ENCODE measurements at regions of chr1 and their contacts with region 1.

Region 1: DNA sequence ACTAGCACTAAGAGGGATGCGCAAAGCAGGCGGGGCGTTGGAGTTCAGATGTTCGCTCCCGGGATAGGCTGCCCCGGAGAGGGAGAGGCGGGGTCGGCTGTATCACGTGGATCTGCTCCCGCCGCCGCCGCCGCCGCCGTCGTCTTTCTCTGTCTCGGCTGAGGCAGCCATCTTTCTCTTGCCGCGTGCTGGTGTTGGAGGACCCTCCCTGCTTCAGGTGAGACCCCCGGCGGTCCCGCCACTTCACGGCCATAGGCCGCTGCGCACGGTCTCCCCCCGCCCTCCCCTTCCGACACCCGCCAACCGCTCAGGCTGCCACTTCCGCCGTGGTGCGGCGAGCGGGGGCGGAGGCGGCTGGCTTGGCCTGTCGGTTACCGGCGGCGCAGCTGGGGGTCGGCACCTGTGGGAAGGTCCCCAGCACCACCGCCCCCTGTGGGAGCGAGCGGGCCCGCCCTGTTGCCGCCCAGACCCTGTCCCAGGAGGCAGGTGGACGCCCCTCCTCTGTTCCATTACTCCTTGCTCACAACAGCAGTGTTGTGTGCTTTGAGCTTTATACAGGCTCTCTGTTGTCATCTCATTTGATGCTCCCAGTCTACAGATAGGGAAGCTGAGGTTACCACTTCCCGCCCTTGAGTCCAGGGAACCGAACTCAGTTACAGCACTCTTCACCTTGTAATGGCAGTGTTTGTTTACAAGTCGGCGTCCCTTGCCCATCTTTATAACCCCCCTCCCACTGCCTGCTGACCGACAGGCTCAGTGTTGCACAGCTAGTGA is at the start of gene BTF3L4:
- DNase-seq: peak; percentile 98
- H3K4me3 Mint-ChIP-seq: peak within 1 kb of the TSS; percentile 92
- H3K27ac Mint-ChIP-seq: peak within 1 kb of the TSS; percentile 100
- H3K4me1 Mint-ChIP-seq: peaks cover 46% of the 10 kb centered on the region
- H3K27me3 Mint-ChIP-seq: no peaks in the 10 kb centered on the region
- total RNA-seq, gene BTF3L4: 48.0 and 50.0 TPM in 2 replicates

Region 2: GRCh38 chr1:51616901-51617708 is 439.2 kb before region 1 on chr1 and contains the start of gene OSBPL9:
- intact Hi-C with region 1: loop called (anchors 10 kb)
- DNase-seq: peak; percentile 95
- H3K4me3 Mint-ChIP-seq: peak within 1 kb of the TSS; percentile 99
- H3K27ac Mint-ChIP-seq: peak within 1 kb of the TSS; percentile 97
- H3K4me1 Mint-ChIP-seq: peaks cover 23% of the 10 kb centered on the region
- H3K27me3 Mint-ChIP-seq: peaks cover 6% of the 10 kb centered on the region
- total RNA-seq, gene OSBPL9: 47.4 and 47.9 TPM in 2 replicates

Region 3: GRCh38 chr1:52033190-52034049 is 22.9 kb before region 1 on chr1 and contains the start of gene KTI12:
- intact Hi-C with region 1: loop called (anchors 1 kb)
- DNase-seq: peak; percentile 96
- H3K4me3 Mint-ChIP-seq: peak within 1 kb of the TSS; percentile 95
- H3K27ac Mint-ChIP-seq: peak within 1 kb of the TSS; percentile 97
- H3K4me1 Mint-ChIP-seq: peaks cover 30% of the 10 kb centered on the region
- H3K27me3 Mint-ChIP-seq: no peaks in the 10 kb centered on the region
- total RNA-seq, gene KTI12: 20.4 and 22.3 TPM in 2 replicates

Region 4: GRCh38 chr1:52323731-52324130 is 267.4 kb after region 1 on chr1:
- intact Hi-C with region 1: no loop called
- DNase-seq: no peak
- H3K4me3 Mint-ChIP-seq: no peak overlapping the region
- H3K27ac Mint-ChIP-seq: no peak overlapping the region
- H3K4me1 Mint-ChIP-seq: no peaks in the 10 kb centered on the region
- H3K27me3 Mint-ChIP-seq: no peaks in the 10 kb centered on the region

Region 5: GRCh38 chr1:52365746-52366516 is 309.6 kb after region 1 on chr1 and contains the start of gene CC2D1B:
- intact Hi-C with region 1: loop called (anchors 1 kb)
- DNase-seq: peak; percentile 100
- H3K4me3 Mint-ChIP-seq: peak within 1 kb of the TSS; percentile 97
- H3K27ac Mint-ChIP-seq: peak within 1 kb of the TSS; percentile 92
- H3K4me1 Mint-ChIP-seq: peaks cover 39% of the 10 kb centered on the region
- H3K27me3 Mint-ChIP-seq: no peaks in the 10 kb centered on the region
- total RNA-seq, gene CC2D1B: 34.8 and 36.7 TPM in 2 replicates

Region 6: DNA sequence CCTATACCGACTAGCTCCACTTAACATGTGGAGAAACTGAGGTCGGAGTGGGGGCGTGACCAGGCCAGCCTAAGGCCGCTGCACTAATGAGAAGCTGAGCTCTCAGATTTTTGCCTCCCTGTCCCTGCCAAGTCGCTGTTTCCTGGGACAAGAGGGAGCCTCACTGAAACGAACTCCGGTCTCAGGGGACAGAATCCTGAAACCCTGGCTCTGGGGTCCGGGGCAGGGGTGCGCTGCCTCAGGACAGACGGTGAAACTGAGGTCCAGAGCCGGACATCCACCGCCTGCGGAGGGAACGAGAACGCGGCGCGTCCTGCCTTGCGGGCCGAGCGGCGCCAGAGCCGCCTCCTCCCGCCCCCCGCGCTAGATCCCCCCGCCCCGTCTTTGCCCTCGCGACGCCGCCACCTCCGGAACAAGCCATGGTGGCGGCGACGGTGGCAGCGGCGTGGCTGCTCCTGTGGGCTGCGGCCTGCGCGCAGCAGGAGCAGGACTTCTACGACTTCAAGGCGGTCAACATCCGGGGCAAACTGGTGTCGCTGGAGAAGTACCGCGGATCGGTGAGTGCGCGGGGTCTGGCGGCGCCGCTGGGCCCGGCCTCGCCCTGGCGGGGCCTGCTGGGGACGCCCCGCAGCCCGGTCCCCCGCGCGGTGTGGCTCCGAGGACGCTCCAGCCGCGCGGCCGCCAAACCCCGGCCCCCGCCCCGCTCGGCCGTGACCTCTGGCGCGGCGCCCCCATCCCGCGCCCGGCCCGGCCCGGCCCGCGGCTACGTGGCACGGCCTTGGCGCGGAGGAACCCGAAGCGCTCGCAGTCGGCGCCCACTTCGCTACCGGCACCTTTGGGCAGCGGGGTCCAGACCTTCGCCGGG is 545.9 kb after region 1 on chr1 and contains the start of gene GPX7:
- intact Hi-C with region 1: loop called (anchors 2 kb)
- DNase-seq: peak; percentile 91
- H3K4me3 Mint-ChIP-seq: peak within 1 kb of the TSS; percentile 84
- H3K27ac Mint-ChIP-seq: peak within 1 kb of the TSS; percentile 87
- H3K4me1 Mint-ChIP-seq: peaks cover 37% of the 10 kb centered on the region
- H3K27me3 Mint-ChIP-seq: no peaks in the 10 kb centered on the region
- total RNA-seq, gene GPX7: 28.0 and 29.4 TPM in 2 replicates

Region 7: GRCh38 chr1:52927212-52928014 is 871.1 kb after region 1 on chr1 and contains the start of gene SCP2:
- intact Hi-C with region 1: loop called (anchors 10 kb)
- DNase-seq: peak; percentile 95
- H3K4me3 Mint-ChIP-seq: peak within 1 kb of the TSS; percentile 88
- H3K27ac Mint-ChIP-seq: peak within 1 kb of the TSS; percentile 74
- H3K4me1 Mint-ChIP-seq: peaks cover 17% of the 10 kb centered on the region
- H3K27me3 Mint-ChIP-seq: peaks cover 6% of the 10 kb centered on the region
- total RNA-seq, gene SCP2: 60.3 and 61.7 TPM in 2 replicates

Measured in activated CD4-positive, alpha-beta T cell treated with anti-CD3 and anti-CD28 coated beads, Interleukin-2, amount 10 ng/mL, durations not matched to agents 24 days and 14 days (primary cell).